Naive thymus-derived CD4-positive, alpha-beta T cell (primary cell): ENCODE measurements at regions of chr6 and their contacts with region 1.

Region 1: GRCh38 chr6:158660333-158660754 is 10.5 kb downstream of the SYTL3 start:
- DNase-seq: peak in 7 of 9 donors; percentile 62 to 82 (median 78)
- ATAC-seq: peak; percentile 80
- H3K4me3 ChIP-seq: no peak overlapping the region
- H3K4me3 Mint-ChIP-seq: peak overlapping the region; percentile 25 to 77 (median 70)
- H3K27ac ChIP-seq: peak overlapping the region; percentile 54
- H3K27ac Mint-ChIP-seq: peak overlapping the region; percentile 29 to 97 (median 90)
- H3K4me1 ChIP-seq: peaks cover 9 to 36% of the 10 kb centered on the region in 2 donors
- H3K4me1 Mint-ChIP-seq: peaks cover 15 to 76% (median 62%) of the 10 kb centered on the region in 7 donors
- H3K27me3 ChIP-seq: no peaks in the 10 kb centered on the region
- H3K27me3 Mint-ChIP-seq: no peaks in the 10 kb centered on the region

Region 2: GRCh38 chr6:158595223-158595622 is 65.1 kb before region 1 on chr6:
- CTCF ChIA-PET with region 1: no interaction called
- POLR2A ChIA-PET with region 1: no interaction called
- intact Hi-C with region 1: no loop called
- DNase-seq: peak in 5 of 9 donors; percentile 7 to 32 (median 21)
- ATAC-seq: peak; percentile 66
- H3K4me3 ChIP-seq: no peak overlapping the region
- H3K4me3 Mint-ChIP-seq: no peak overlapping the region
- H3K27ac ChIP-seq: no peak overlapping the region
- H3K27ac Mint-ChIP-seq: peak overlapping the region in 1 of 9 donors; percentile 1
- H3K4me1 ChIP-seq: no peaks in the 10 kb centered on the region
- H3K4me1 Mint-ChIP-seq: peaks cover 0 to 18% (median 4%) of the 10 kb centered on the region in 7 donors
- H3K27me3 ChIP-seq: no peaks in the 10 kb centered on the region
- H3K27me3 Mint-ChIP-seq: no peaks in the 10 kb centered on the region

Region 3: GRCh38 chr6:158631678-158632537 is 28.4 kb before region 1 on chr6:
- CTCF ChIA-PET with region 1: interaction called, 4 read pairs
- POLR2A ChIA-PET with region 1: interaction called, 6 read pairs
- intact Hi-C with region 1: loop called (anchors 2 to 5 kb)
- DNase-seq: no peak
- ATAC-seq: peak; percentile 47
- H3K4me3 ChIP-seq: no peak overlapping the region
- H3K4me3 Mint-ChIP-seq: no peak overlapping the region
- H3K27ac ChIP-seq: peak overlapping the region; percentile 49
- H3K27ac Mint-ChIP-seq: peak overlapping the region; percentile 52 to 91 (median 83)
- H3K4me1 ChIP-seq: peaks cover 15 to 16% of the 10 kb centered on the region in 2 donors
- H3K4me1 Mint-ChIP-seq: peaks cover 21 to 61% (median 48%) of the 10 kb centered on the region in 7 donors
- H3K27me3 ChIP-seq: no peaks in the 10 kb centered on the region
- H3K27me3 Mint-ChIP-seq: no peaks in the 10 kb centered on the region

Region 4: GRCh38 chr6:158639056-158639455 is 21.3 kb before region 1 on chr6:
- CTCF ChIA-PET with region 1: interaction called, 15 read pairs
- POLR2A ChIA-PET with region 1: interaction called, 78 read pairs
- intact Hi-C with region 1: loop called (anchors 2 kb)
- DNase-seq: no peak
- ATAC-seq: no peak
- H3K4me3 ChIP-seq: no peak overlapping the region
- H3K4me3 Mint-ChIP-seq: peak overlapping the region in 3 of 10 donors; percentile 2 to 39 (median 21)
- H3K27ac ChIP-seq: peak overlapping the region; percentile 37
- H3K27ac Mint-ChIP-seq: peak overlapping the region; percentile 44 to 86 (median 68)
- H3K4me1 ChIP-seq: peaks cover 56 to 59% of the 10 kb centered on the region in 2 donors
- H3K4me1 Mint-ChIP-seq: peaks cover 52 to 90% (median 82%) of the 10 kb centered on the region in 7 donors
- H3K27me3 ChIP-seq: no peaks in the 10 kb centered on the region
- H3K27me3 Mint-ChIP-seq: no peaks in the 10 kb centered on the region

Region 5: GRCh38 chr6:158644231-158645063 is 15.9 kb before region 1 on chr6 and contains the start of gene DYNLT1:
- CTCF ChIA-PET with region 1: interaction called, 15 read pairs
- POLR2A ChIA-PET with region 1: interaction called, 78 read pairs
- intact Hi-C with region 1: loop called in 1 of 2 experiments (anchors 2 kb)
- DNase-seq: peak; percentile 72 to 99 (median 87)
- ATAC-seq: peak; percentile 88
- H3K4me3 ChIP-seq: peak within 1 kb of the TSS; percentile 81
- H3K4me3 Mint-ChIP-seq: peak within 1 kb of the TSS; percentile 92 to 100 (median 99)
- H3K27ac ChIP-seq: peak within 1 kb of the TSS; percentile 97
- H3K27ac Mint-ChIP-seq: peak within 1 kb of the TSS; percentile 88 to 100 (median 98)
- H3K4me1 ChIP-seq: peaks cover 35 to 45% of the 10 kb centered on the region in 2 donors
- H3K4me1 Mint-ChIP-seq: peaks cover 47 to 72% (median 67%) of the 10 kb centered on the region in 7 donors
- H3K27me3 ChIP-seq: no peaks in the 10 kb centered on the region
- H3K27me3 Mint-ChIP-seq: no peaks in the 10 kb centered on the region
- total RNA-seq, gene DYNLT1: 66.4 to 122 (median 75.9) TPM